Activated CD4-positive, alpha-beta memory T cell treated with anti-CD3 and anti-CD28 coated beads for 36 hours (primary cell): ENCODE measurements at regions of chr13 and their contacts with region 1.

Region 1: GRCh38 chr13:30142486-30143211 is 164.7 kb downstream of the KATNAL1 start:
- DNase-seq: peak; percentile 68
- H3K4me3 Mint-ChIP-seq: no peak overlapping the region
- H3K27ac Mint-ChIP-seq: peak overlapping the region; percentile 92
- H3K4me1 Mint-ChIP-seq: peaks cover 70% of the 10 kb centered on the region
- H3K27me3 Mint-ChIP-seq: no peaks in the 10 kb centered on the region

Region 2: GRCh38 chr13:29125191-29125933 is 1017.3 kb before region 1 on chr13:
- CTCF ChIA-PET with region 1: no interaction called
- POLR2A ChIA-PET with region 1: no interaction called
- intact Hi-C with region 1: loop called (anchors 10 kb)
- DNase-seq: no peak
- H3K4me3 Mint-ChIP-seq: peak overlapping the region; percentile 21
- H3K27ac Mint-ChIP-seq: peak overlapping the region; percentile 80
- H3K4me1 Mint-ChIP-seq: peaks cover 19% of the 10 kb centered on the region
- H3K27me3 Mint-ChIP-seq: no peaks in the 10 kb centered on the region

Region 3: DNA sequence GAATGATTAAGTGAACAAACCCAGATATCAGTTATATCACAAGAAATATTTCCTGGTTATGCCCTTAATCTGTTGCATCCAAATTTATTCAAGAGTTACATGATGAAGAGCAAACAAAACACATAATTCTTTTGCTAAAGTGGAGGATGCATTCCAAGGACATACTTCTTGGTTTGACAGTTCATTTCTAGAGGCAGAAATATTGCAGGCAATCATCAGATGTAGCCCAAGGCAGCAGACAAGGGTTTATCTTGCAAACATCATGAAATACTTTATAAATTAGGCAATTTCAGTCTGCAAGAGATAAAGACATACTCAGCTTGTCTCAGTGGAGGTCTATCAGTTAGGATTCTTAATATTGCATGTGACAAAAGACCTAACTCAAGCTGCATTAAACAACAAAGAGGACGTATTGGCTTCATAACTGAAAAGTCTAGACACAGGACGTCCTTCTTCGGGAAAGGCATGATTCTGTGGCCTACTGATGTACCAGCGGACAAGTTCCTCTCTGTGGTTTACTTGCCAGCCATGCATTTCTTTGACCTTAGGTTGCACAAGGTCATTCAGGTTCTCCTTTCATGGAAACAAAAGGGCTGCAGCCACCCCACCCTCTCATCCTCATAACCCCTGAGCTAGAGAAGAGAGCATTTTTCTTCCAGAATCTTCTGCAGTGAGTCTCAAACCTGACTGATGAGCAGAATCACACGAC is 39.4 kb before region 1 on chr13:
- CTCF ChIA-PET with region 1: no interaction called
- POLR2A ChIA-PET with region 1: no interaction called
- intact Hi-C with region 1: no loop called
- DNase-seq: no peak
- H3K4me3 Mint-ChIP-seq: no peak overlapping the region
- H3K27ac Mint-ChIP-seq: no peak overlapping the region
- H3K4me1 Mint-ChIP-seq: no peaks in the 10 kb centered on the region
- H3K27me3 Mint-ChIP-seq: peaks cover 1% of the 10 kb centered on the region

Region 4: DNA sequence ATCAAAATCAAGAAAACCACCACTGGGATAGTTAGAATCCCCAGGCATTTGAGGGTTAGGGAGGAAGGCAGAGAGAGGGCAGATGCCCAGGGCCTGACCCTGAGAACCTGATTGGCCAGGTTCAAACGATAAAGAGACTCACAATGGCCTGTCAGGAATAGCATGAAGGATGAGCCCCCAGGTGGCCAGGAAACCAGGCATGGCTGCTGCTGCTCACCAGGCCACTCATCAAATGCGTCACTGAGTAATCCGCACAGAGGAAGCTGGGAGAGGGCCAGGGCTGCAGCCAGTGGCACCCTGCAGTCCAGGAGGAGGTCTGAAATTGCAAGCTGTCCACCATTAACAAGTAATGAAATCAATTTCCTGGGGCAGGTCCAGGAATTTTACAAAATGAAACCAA is 53.4 kb after region 1 on chr13:
- CTCF ChIA-PET with region 1: no interaction called
- POLR2A ChIA-PET with region 1: no interaction called
- intact Hi-C with region 1: no loop called
- DNase-seq: no peak
- H3K4me3 Mint-ChIP-seq: no peak overlapping the region
- H3K27ac Mint-ChIP-seq: no peak overlapping the region
- H3K4me1 Mint-ChIP-seq: peaks cover 2% of the 10 kb centered on the region
- H3K27me3 Mint-ChIP-seq: no peaks in the 10 kb centered on the region

Region 5: GRCh38 chr13:30224732-30225131 is 82.1 kb after region 1 on chr13:
- CTCF ChIA-PET with region 1: interaction called, 3 read pairs
- POLR2A ChIA-PET with region 1: interaction called, 8 read pairs
- intact Hi-C with region 1: loop called (anchors 2 kb)
- DNase-seq: no peak
- H3K4me3 Mint-ChIP-seq: no peak overlapping the region
- H3K27ac Mint-ChIP-seq: peak overlapping the region; percentile 46
- H3K4me1 Mint-ChIP-seq: peaks cover 17% of the 10 kb centered on the region
- H3K27me3 Mint-ChIP-seq: no peaks in the 10 kb centered on the region

Region 6: DNA sequence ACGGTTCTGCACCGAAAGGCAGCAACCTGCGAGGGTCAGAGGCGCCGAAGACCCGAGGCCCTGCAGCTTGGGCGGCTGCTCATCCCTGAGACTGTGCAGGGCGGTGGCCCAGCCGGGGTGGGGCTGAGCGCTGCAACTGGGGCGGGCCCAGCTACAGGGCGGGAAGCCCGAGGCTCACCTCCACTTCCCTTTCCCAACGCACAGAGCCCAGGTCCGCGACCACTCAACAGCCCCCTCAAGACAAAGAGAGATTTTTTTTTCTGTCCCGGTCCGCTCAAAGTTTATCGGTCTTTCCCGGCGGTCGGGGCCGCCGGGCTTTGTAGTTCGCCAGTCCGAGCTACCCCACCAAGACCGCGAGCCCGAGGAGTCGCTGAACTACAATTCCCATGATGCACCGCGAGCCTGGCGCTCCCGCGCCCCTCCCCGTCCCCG is 164.1 kb after region 1 on chr13:
- CTCF ChIA-PET with region 1: no interaction called
- POLR2A ChIA-PET with region 1: interaction called, 3 read pairs
- intact Hi-C with region 1: loop called (anchors 5 kb)
- DNase-seq: peak; percentile 94
- H3K4me3 Mint-ChIP-seq: peak overlapping the region; percentile 84
- H3K27ac Mint-ChIP-seq: peak overlapping the region; percentile 87
- H3K4me1 Mint-ChIP-seq: peaks cover 49% of the 10 kb centered on the region
- H3K27me3 Mint-ChIP-seq: no peaks in the 10 kb centered on the region

Region 7: GRCh38 chr13:30577401-30577852 is 434.8 kb after region 1 on chr13:
- CTCF ChIA-PET with region 1: no interaction called
- POLR2A ChIA-PET with region 1: no interaction called
- intact Hi-C with region 1: loop called (anchors 5 kb)
- DNase-seq: peak; percentile 80
- H3K4me3 Mint-ChIP-seq: no peak overlapping the region
- H3K27ac Mint-ChIP-seq: peak overlapping the region; percentile 11
- H3K4me1 Mint-ChIP-seq: peaks cover 23% of the 10 kb centered on the region
- H3K27me3 Mint-ChIP-seq: peaks cover 1% of the 10 kb centered on the region